HepG2 (cell line): ENCODE measurements at regions of chr14 and their contacts with region 1.

Region 1: DNA sequence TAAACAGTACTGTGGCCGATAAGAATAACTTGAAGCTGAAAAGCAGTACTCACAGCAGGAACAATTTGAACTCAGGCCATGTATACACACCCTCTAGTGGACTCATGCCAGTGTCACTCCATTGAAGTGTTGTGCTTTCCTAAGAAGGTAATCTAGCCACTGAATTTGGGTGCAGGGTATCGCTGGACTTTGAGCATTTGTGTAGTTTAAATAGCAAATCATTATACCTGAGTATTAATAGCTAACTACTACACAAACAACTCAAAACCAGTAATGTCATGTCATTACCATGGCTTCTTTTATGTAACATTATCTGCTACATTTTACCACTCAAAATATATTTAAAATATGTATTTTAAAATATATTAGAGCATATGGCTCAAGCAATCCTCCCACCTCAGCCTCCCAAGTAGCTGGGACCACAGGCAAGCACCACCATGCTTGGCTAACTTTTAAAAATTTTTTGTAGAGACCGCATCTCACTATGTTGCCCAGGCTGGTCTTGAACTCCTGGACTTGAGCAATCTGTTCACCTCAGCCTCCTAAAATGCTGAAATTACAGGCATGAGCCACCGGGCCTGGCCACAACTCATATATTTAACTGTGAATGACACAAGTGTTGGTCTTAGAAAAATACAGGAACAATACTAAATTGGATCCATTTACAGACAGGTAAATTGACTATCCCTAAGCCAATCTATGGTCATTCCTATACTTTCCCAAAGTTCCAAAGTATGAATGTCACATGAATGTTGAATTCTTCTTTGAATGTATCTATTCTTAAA is 25.6 kb upstream of the ARID4A start:
- DNase-seq: peak; percentile 98
- ATAC-seq: peak; percentile 97
- H3K4me3 ChIP-seq: no peak overlapping the region; a peak in 1 of 6 replicates
- H3K27ac ChIP-seq: peak overlapping the region; percentile 89
- H3K4me1 ChIP-seq: peaks cover 70% of the 10 kb centered on the region
- H3K27me3 ChIP-seq: no peaks in the 10 kb centered on the region
- CTCF ChIP-seq: peak; percentile 77
- EP300 ChIP-seq: peak in 1 of 2 experiments; percentile 70; a peak in 2 of 4 replicates
- POLR2A ChIP-seq: peak; percentile 50 to 51; a peak in 3 of 4 replicates
- RAD21 ChIP-seq: peak; percentile 68; the same call in 1 of the 2 replicates

Region 2: DNA sequence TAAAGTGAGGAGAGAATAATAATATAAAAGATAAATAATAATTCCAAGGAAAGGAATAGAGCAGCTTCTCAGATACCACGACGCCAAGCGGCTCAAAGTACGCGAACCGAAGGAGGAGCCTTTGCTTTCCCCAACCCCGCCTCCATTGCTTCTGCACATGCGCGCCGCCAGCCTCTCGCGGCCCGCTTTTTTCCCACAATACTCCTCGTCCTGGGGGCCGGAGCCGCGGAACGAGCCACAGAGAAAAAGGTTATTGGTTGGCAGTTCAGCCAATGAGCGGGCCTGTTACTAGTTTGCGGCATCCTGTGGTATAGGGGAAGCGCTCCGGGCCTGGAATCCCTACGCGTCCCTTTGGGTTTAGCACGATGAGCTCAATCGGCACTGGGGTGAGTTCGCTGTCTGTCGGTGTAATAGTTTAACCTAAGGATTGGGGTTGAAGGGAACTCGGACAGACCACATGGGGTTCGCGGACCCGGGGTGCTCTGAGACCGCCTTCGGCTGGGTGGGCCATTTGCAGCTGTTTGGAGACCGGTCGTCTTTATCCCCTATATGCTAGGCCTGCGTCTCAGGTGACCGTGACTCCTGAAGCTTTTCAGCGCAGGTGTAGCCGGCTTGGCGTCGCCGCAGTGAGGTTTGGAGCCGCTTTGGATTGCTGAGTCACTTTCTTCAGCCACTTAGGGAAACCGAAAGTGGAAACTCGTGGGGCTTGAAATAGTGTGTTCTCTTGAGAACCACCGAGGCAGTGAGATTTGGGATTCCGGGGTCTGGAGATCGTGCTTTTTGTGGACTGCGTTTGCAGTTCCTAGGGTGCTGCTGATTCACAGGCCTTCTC is 28.0 kb before region 1 on chr14 and contains the start of gene PSMA3:
- CTCF ChIA-PET with region 1: no interaction called
- POLR2A ChIA-PET with region 1: interaction called, 17 read pairs
- in situ Hi-C with region 1: no loop called
- intact Hi-C with region 1: loop called (anchors 1 kb)
- DNase-seq: peak; percentile 96
- ATAC-seq: peak; percentile 94
- H3K4me3 ChIP-seq: peak within 1 kb of the TSS; percentile 66 to 100 (median 93)
- H3K27ac ChIP-seq: peak within 1 kb of the TSS; percentile 99
- H3K4me1 ChIP-seq: peaks cover 39% of the 10 kb centered on the region
- H3K27me3 ChIP-seq: no peaks in the 10 kb centered on the region; a peak in 1 of 5 replicates
- CTCF ChIP-seq: no peak
- EP300 ChIP-seq: no peak
- POLR2A ChIP-seq: peak; percentile 77 to 95
- RAD21 ChIP-seq: no peak
- total RNA-seq, gene PSMA3: 275 and 443 TPM in 2 replicates

Region 3: GRCh38 chr14:58258156-58258555 is 14.6 kb before region 1 on chr14:
- CTCF ChIA-PET with region 1: no interaction called
- POLR2A ChIA-PET with region 1: interaction called, 22 read pairs
- in situ Hi-C with region 1: no loop called
- intact Hi-C with region 1: no loop called
- DNase-seq: no peak
- ATAC-seq: peak; percentile 69
- H3K4me3 ChIP-seq: no peak overlapping the region
- H3K27ac ChIP-seq: no peak overlapping the region
- H3K4me1 ChIP-seq: no peaks in the 10 kb centered on the region
- H3K27me3 ChIP-seq: no peaks in the 10 kb centered on the region
- CTCF ChIP-seq: no peak
- EP300 ChIP-seq: no peak
- POLR2A ChIP-seq: no peak
- RAD21 ChIP-seq: no peak

Region 4: DNA sequence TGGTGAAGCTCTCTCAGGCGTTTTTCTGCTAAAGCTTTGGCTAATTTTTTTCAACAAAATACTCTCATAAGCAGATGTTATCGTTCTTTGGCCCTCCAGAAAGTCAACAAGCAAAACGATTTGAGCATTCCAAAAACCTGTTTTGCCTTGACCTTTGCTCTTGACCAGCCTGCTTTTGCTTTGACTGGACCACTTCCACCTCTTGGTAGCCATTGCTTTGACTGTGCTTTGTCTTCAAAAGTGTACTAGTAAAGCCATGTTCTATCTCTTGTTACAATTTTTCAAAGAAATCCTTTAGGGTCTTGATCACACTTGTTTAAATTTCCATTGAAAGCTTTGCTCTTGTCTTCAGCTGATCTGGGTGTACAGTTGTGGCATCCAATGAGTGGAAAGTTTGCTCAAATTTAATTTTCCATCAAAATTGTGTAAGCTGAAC is 14.8 kb after region 1 on chr14:
- CTCF ChIA-PET with region 1: no interaction called
- POLR2A ChIA-PET with region 1: interaction called, 23 read pairs
- in situ Hi-C with region 1: no loop called
- intact Hi-C with region 1: no loop called
- DNase-seq: peak; percentile 94
- ATAC-seq: peak; percentile 88
- H3K4me3 ChIP-seq: peak overlapping the region in 1 of 3 experiments; percentile 34; a peak in 1 of 6 replicates
- H3K27ac ChIP-seq: peak overlapping the region; percentile 68
- H3K4me1 ChIP-seq: peaks cover 79% of the 10 kb centered on the region
- H3K27me3 ChIP-seq: no peaks in the 10 kb centered on the region
- CTCF ChIP-seq: no peak
- EP300 ChIP-seq: peak; percentile 18 to 85; a peak in 2 of 4 replicates
- POLR2A ChIP-seq: no peak
- RAD21 ChIP-seq: 0 out of 2 replicates have a peak, but pooled peaks have one; percentile 27

Region 5: DNA sequence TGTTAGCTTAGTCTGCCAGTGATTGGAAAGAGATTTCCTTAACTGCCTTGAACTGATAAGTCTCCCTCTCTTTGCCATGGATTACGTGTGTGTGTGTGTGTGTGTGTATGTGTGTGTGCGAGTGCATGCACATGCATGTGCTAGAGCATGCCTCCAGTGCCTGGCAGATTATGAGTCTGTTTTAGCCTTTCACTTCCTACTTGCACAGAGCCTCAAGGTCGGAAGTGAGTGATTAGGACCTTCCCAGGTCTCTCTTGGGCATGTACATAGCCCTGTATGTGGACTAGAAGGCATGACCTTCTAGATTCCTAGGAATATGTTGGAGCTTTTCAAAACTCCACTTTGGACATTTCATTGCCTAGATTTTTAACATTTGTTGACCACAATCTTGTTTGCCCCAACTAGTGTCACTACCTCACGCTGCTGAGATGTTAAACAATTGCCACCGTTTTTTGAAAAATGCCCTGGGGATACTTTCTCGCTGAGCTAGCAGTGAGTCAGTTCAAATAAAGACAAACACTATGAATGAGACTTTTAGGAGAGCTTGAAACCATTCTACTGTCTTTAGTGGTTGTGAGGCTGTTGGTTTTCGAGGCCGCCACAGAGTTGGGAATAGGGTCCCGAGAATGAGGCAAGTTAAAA is 182.9 kb after region 1 on chr14:
- CTCF ChIA-PET with region 1: no interaction called
- POLR2A ChIA-PET with region 1: no interaction called
- in situ Hi-C with region 1: no loop called
- intact Hi-C with region 1: no loop called
- DNase-seq: no peak
- ATAC-seq: no peak
- H3K4me3 ChIP-seq: no peak overlapping the region
- H3K27ac ChIP-seq: no peak overlapping the region
- H3K4me1 ChIP-seq: no peaks in the 10 kb centered on the region
- H3K27me3 ChIP-seq: no peaks in the 10 kb centered on the region
- CTCF ChIP-seq: no peak
- EP300 ChIP-seq: no peak
- POLR2A ChIP-seq: no peak
- RAD21 ChIP-seq: no peak

Region 6: GRCh38 chr14:58772799-58773620 is 500.2 kb after region 1 on chr14:
- CTCF ChIA-PET with region 1: no interaction called
- POLR2A ChIA-PET with region 1: no interaction called
- in situ Hi-C with region 1: no loop called
- intact Hi-C with region 1: no loop called
- DNase-seq: no peak
- ATAC-seq: no peak
- H3K4me3 ChIP-seq: no peak overlapping the region
- H3K27ac ChIP-seq: no peak overlapping the region
- H3K4me1 ChIP-seq: no peaks in the 10 kb centered on the region
- H3K27me3 ChIP-seq: no peaks in the 10 kb centered on the region
- CTCF ChIP-seq: no peak
- EP300 ChIP-seq: no peak
- POLR2A ChIP-seq: no peak
- RAD21 ChIP-seq: no peak

Region 7: DNA sequence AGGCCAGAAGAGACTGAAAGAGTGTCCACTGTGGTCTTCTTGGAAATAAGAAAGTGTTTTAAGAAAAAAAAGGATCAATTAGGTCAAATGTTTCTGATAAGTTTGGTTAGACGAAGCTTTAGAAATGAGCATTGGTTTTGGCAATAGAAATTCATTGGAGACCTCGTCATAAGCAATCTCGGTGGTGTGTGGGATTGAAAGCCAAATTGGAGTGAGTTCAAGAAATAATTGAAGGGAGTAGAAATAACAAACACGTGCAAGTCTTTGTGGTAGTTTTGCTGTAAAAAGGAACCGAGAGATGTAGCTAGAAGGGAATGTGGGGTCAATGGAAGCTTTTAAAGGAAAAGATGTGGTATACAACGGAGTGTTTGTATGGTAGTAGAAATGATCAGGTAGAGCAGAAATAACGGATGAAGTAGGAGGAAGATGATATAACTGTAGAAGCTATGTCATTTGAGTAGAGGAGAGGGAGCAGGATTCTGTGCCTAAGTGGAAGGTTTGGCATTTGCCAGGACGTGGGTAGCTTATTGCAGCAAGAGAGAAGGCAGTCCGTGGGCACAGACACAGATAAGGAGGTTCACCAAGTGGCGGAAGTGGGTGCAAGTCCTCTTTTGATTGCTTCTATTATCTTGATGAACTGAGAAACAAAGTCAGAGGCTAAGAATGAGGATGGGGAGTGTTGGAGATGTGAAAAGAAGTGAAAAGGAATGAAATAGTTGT is 511.2 kb after region 1 on chr14:
- CTCF ChIA-PET with region 1: no interaction called
- POLR2A ChIA-PET with region 1: no interaction called
- in situ Hi-C with region 1: no loop called
- intact Hi-C with region 1: no loop called
- DNase-seq: no peak
- ATAC-seq: no peak
- H3K4me3 ChIP-seq: no peak overlapping the region
- H3K27ac ChIP-seq: no peak overlapping the region
- H3K4me1 ChIP-seq: no peaks in the 10 kb centered on the region
- H3K27me3 ChIP-seq: no peaks in the 10 kb centered on the region
- CTCF ChIP-seq: no peak
- EP300 ChIP-seq: no peak
- POLR2A ChIP-seq: no peak
- RAD21 ChIP-seq: no peak